H1 (cell line): ENCODE measurements at regions of chr14 and their contacts with region 1.

Region 1: GRCh38 chr14:75452900-75453747 is 25.3 kb downstream of the JDP2 start:
- DNase-seq: peak; percentile 82 to 92
- H3K4me3 ChIP-seq: peak overlapping the region in 1 of 4 experiments; percentile 29; a peak in 1 of 8 replicates
- H3K27ac ChIP-seq: peak overlapping the region; percentile 87
- H3K4me1 ChIP-seq: peaks cover 17 to 32% (median 28%) of the 10 kb centered on the region in 4 experiments
- H3K27me3 ChIP-seq: no peaks in the 10 kb centered on the region
- CTCF ChIP-seq: no peak; a peak in 1 of 4 replicates
- EP300 ChIP-seq: peak in 1 of 2 experiments; percentile 93; a peak in 2 of 3 replicates
- POLR2A ChIP-seq: peak in 1 of 2 experiments; percentile 53; a peak in 2 of 3 replicates
- RAD21 ChIP-seq: no peak; a peak in 1 of 4 replicates

Region 2: GRCh38 chr14:75433631-75434071 is 19.5 kb before region 1 on chr14:
- CTCF ChIA-PET with region 1: interaction called, 27 read pairs
- POLR2A ChIA-PET with region 1: interaction called, 53 read pairs
- DNase-seq: no peak
- H3K4me3 ChIP-seq: no peak overlapping the region
- H3K27ac ChIP-seq: no peak overlapping the region
- H3K4me1 ChIP-seq: peaks cover 3 to 23% (median 14%) of the 10 kb centered on the region in 4 experiments
- H3K27me3 ChIP-seq: no peaks in the 10 kb centered on the region; a peak in 1 of 7 replicates
- CTCF ChIP-seq: no peak
- EP300 ChIP-seq: no peak
- POLR2A ChIP-seq: no peak
- RAD21 ChIP-seq: no peak

Region 3: GRCh38 chr14:75440733-75441477 is 12.2 kb before region 1 on chr14:
- CTCF ChIA-PET with region 1: interaction called, 27 read pairs
- POLR2A ChIA-PET with region 1: interaction called, 53 read pairs
- DNase-seq: no peak
- H3K4me3 ChIP-seq: no peak overlapping the region
- H3K27ac ChIP-seq: no peak overlapping the region
- H3K4me1 ChIP-seq: peaks cover 2 to 15% (median 9%) of the 10 kb centered on the region in 4 experiments
- H3K27me3 ChIP-seq: no peaks in the 10 kb centered on the region
- CTCF ChIP-seq: no peak
- EP300 ChIP-seq: no peak
- POLR2A ChIP-seq: no peak
- RAD21 ChIP-seq: no peak